ENCODE measurements at regions of chr3 and their contacts with region 1.

Region 1: GRCh38 chr3:13657660-13658435 is 108.9 kb downstream of the FBLN2 start:
- DNase-seq: peak; percentile 76
- H3K4me3 Mint-ChIP-seq: no peak overlapping the region
- H3K27ac Mint-ChIP-seq: no peak overlapping the region
- H3K4me1 Mint-ChIP-seq: peaks cover 30% of the 10 kb centered on the region
- H3K27me3 Mint-ChIP-seq: peaks cover 66% of the 10 kb centered on the region

Region 2: DNA sequence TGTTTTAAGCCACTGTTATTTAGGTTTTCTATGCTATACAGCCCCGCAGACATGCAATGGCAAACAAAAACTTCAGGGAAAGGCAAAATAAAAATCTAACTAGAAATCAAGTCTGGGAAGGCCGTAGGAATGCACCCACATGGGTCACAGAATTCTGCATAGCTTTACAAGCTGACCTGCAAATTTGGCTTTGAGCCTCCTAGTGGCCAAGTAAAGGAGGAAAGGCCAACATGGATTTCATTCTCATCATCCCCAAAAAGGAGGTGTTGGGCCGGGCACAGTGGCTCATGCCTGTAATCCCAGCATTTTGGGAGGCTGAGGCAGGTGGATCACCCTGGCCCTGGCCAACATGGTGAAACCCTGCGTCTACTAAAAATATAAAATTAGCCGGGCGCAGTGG is 15.4 kb after region 1 on chr3:
- CTCF ChIA-PET with region 1: interaction called, 13 read pairs
- DNase-seq: no peak
- H3K4me3 Mint-ChIP-seq: no peak overlapping the region
- H3K27ac Mint-ChIP-seq: no peak overlapping the region
- H3K4me1 Mint-ChIP-seq: no peaks in the 10 kb centered on the region
- H3K27me3 Mint-ChIP-seq: peaks cover 18% of the 10 kb centered on the region

Region 3: DNA sequence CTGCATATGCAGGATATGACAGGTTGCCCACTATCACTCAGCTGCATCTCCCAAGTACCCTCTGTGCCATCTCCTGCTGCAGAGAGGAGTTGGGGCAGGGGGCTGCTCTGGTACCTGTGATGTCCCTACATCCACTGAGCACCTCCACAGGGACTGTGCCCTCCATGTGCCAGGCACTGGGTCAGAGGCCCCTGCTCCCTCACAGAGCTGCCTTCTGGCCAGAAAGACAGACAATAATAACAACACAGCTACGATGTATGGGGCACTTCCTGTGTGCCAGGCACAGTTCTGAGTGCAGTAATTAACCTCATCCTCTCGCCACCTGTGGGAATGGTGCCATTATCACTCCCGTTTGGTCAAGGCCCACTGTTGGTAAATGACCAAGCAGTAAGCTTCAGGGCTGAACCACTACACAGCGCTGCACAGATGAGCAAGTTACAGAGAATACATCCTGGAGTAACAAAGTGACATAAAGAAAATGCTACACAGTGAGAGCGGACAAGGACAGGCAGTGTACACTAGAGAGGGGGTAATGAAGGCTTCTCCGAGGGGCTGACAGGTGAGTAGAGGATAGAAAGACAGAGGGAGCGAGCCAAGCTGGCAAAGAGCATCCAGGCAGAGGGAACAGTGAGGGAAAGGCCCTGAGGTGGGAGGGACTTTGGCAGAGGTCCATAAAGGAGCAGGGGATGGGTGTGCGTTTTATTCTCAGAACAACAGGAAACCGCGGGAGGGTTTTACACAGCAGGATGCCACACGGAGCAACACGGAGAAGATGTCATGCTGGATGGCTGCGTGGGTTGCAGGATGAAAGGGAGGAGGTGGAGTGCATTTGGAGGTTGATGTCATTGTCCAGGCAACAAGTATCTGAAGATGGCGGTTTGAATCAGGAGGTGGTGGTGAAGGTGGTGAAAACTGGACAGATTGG is 208.5 kb after region 1 on chr3:
- CTCF ChIA-PET with region 1: interaction called, 12 read pairs
- DNase-seq: peak; percentile 83
- H3K4me3 Mint-ChIP-seq: peak overlapping the region; percentile 31
- H3K27ac Mint-ChIP-seq: peak overlapping the region; percentile 96
- H3K4me1 Mint-ChIP-seq: peaks cover 57% of the 10 kb centered on the region
- H3K27me3 Mint-ChIP-seq: peaks cover 36% of the 10 kb centered on the region

Region 4: GRCh38 chr3:13876276-13877100 is 218.6 kb after region 1 on chr3:
- CTCF ChIA-PET with region 1: interaction called, 470 read pairs
- DNase-seq: no peak
- H3K4me3 Mint-ChIP-seq: no peak overlapping the region
- H3K27ac Mint-ChIP-seq: no peak overlapping the region
- H3K4me1 Mint-ChIP-seq: peaks cover 14% of the 10 kb centered on the region
- H3K27me3 Mint-ChIP-seq: peaks cover 85% of the 10 kb centered on the region

Region 5: GRCh38 chr3:13895155-13896105 is 237.6 kb after region 1 on chr3:
- CTCF ChIA-PET with region 1: interaction called, 470 read pairs
- DNase-seq: peak; percentile 98
- H3K4me3 Mint-ChIP-seq: peak overlapping the region; percentile 84
- H3K27ac Mint-ChIP-seq: peak overlapping the region; percentile 88
- H3K4me1 Mint-ChIP-seq: peaks cover 36% of the 10 kb centered on the region
- H3K27me3 Mint-ChIP-seq: peaks cover 33% of the 10 kb centered on the region

Measured in activated naive CD4-positive, alpha-beta T cell treated with anti-CD3 and anti-CD28 coated beads, Interleukin-2, amount 10 ng/mL, durations not matched to agents 7 days and 5 days (primary cell).